Ovary (tissue), 10 donors: ENCODE measurements at regions of chr18 and their contacts with region 1.

Region 1: GRCh38 chr18:38801640-38802039 is 1236.0 kb upstream of the CELF4 start:
- DNase-seq: no peak
- H3K4me3 ChIP-seq: no peak overlapping the region
- H3K27ac ChIP-seq: no peak overlapping the region
- H3K4me1 ChIP-seq: no peaks in the 10 kb centered on the region
- H3K27me3 ChIP-seq: no peaks in the 10 kb centered on the region
- CTCF ChIP-seq: no peak
- EP300 ChIP-seq: no peak
- POLR2A ChIP-seq: no peak

Region 2: GRCh38 chr18:38751898-38752297 is 49.7 kb before region 1 on chr18:
- intact Hi-C with region 1: loop called in 1 of 4 experiments (anchors 10 kb)
- DNase-seq: no peak
- H3K4me3 ChIP-seq: no peak overlapping the region
- H3K27ac ChIP-seq: no peak overlapping the region
- H3K4me1 ChIP-seq: no peaks in the 10 kb centered on the region
- H3K27me3 ChIP-seq: no peaks in the 10 kb centered on the region
- CTCF ChIP-seq: no peak
- EP300 ChIP-seq: no peak
- POLR2A ChIP-seq: no peak